ENCODE measurements at regions of chr18 and their contacts with region 1.

Region 1: GRCh38 chr18:27274901-27275300 is 89.8 kb upstream of the CHST9 start:
- DNase-seq: no peak

Region 2: DNA sequence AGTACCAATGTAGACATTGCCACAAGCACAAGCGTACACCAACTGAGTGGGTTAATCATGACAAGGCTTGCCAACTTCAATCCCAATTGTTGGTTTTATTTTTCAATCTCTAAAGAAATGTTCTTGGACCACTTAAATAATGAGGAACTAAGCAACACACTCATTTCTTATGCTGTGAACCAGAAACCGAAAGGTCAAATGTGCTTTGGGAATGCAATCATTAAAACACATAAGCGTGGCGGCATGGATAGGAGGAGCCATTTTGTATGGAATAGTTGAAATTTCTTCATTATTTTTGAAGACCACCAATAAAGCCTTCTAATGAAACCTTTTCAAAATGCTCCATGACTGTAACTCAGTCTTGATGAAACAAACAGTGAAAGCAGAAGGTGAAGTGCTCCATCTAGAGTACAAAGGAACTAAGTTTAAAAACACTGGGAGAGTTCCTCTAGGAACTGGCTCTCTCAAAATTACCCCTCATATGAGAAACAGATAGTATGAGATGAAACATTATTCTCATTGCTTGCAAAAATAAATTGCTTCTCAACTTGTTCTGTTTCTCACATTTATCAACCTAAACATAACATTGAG is 23.4 kb after region 1 on chr18:
- CTCF ChIA-PET with region 1: interaction called, 12 read pairs
- POLR2A ChIA-PET with region 1: no interaction called
- DNase-seq: peak; percentile 27